ENCODE measurements at regions of chr17 and their contacts with region 1.

Region 1: GRCh38 chr17:79839363-79840268 is at the start of gene CBX4:
- DNase-seq: peak; percentile 93
- ATAC-seq: peak; percentile 73
- H3K4me3 ChIP-seq: peak within 1 kb of the TSS; percentile 63 to 99 (median 94)
- H3K4me3 Mint-ChIP-seq: peak within 1 kb of the TSS; percentile 98
- H3K27ac ChIP-seq: peak within 1 kb of the TSS; percentile 66 to 67
- H3K27ac Mint-ChIP-seq: peak within 1 kb of the TSS; percentile 98
- H3K4me1 ChIP-seq: peaks cover 71 to 83% of the 10 kb centered on the region in 2 donors
- H3K4me1 Mint-ChIP-seq: peaks cover 55% of the 10 kb centered on the region
- H3K27me3 ChIP-seq: peaks cover 0 to 49% (median 31%) of the 10 kb centered on the region in 4 experiments
- H3K27me3 Mint-ChIP-seq: peaks cover 15% of the 10 kb centered on the region
- CTCF ChIP-seq: peak; percentile 74
- total RNA-seq, gene CBX4: 73.2 and 81.9 TPM in 2 replicates

Region 2: DNA sequence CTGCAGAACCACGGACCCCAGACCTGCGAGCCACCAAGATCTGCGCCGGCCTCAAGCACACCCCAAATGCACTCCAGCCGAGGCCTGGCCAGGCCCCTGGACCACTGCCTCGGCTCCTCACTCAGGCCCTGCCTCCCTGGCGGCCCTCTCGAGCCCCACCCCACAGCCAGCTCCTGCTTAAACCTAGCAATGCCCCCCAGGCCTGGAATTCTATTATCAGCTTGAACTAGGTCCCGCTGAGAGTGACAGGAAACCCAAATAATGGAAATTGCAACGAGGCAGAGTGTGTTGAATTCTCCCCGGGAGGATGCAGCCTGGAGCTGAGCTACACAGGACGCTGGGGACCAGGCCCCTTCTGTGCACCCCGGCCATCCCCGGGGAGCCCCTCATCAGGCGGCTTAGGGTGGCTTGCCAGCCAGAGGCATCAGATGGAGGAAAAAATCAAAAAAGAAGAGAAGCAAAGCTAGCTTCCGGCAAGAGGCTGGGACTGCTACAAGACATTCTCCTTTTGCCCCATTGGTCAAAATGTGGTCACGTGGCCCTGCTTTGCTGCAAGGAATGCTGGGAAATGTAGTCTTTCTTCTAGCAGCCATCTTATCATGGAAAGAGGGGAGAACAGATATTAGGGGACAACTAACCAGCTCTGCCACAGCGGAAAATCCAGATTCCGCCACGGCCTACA is 111.2 kb before region 1 on chr17:
- CTCF ChIA-PET with region 1: no interaction called
- POLR2A ChIA-PET with region 1: no interaction called
- intact Hi-C with region 1: loop called (anchors 5 kb)
- DNase-seq: peak; percentile 91
- ATAC-seq: peak; percentile 53
- H3K4me3 ChIP-seq: peak overlapping the region in 4 of 5 experiments; percentile 35 to 58 (median 44)
- H3K4me3 Mint-ChIP-seq: peak overlapping the region; percentile 83
- H3K27ac ChIP-seq: peak overlapping the region in 1 of 2 donors; percentile 41
- H3K27ac Mint-ChIP-seq: peak overlapping the region; percentile 53
- H3K4me1 ChIP-seq: peaks cover 16 to 26% of the 10 kb centered on the region in 2 donors
- H3K4me1 Mint-ChIP-seq: peaks cover 46% of the 10 kb centered on the region
- H3K27me3 ChIP-seq: no peaks in the 10 kb centered on the region
- H3K27me3 Mint-ChIP-seq: no peaks in the 10 kb centered on the region
- CTCF ChIP-seq: no peak

Region 3: GRCh38 chr17:79796763-79797491 is 42.7 kb before region 1 on chr17 and contains the start of gene CBX8:
- CTCF ChIA-PET with region 1: interaction called, 18 read pairs
- POLR2A ChIA-PET with region 1: interaction called, 45 read pairs
- intact Hi-C with region 1: loop called (anchors 1 kb)
- DNase-seq: peak; percentile 99
- ATAC-seq: peak; percentile 90
- H3K4me3 ChIP-seq: peak within 1 kb of the TSS; percentile 65 to 90 (median 71)
- H3K4me3 Mint-ChIP-seq: peak within 1 kb of the TSS; percentile 91
- H3K27ac ChIP-seq: peak within 1 kb of the TSS; percentile 50 to 68
- H3K27ac Mint-ChIP-seq: peak within 1 kb of the TSS; percentile 95
- H3K4me1 ChIP-seq: peaks cover 46 to 50% of the 10 kb centered on the region in 2 donors
- H3K4me1 Mint-ChIP-seq: peaks cover 41% of the 10 kb centered on the region
- H3K27me3 ChIP-seq: peaks cover 0 to 61% (median 46%) of the 10 kb centered on the region in 4 experiments
- H3K27me3 Mint-ChIP-seq: peaks cover 39% of the 10 kb centered on the region
- CTCF ChIP-seq: no peak
- total RNA-seq, gene CBX8: 6.8 and 10.3 TPM in 2 replicates

Region 4: DNA sequence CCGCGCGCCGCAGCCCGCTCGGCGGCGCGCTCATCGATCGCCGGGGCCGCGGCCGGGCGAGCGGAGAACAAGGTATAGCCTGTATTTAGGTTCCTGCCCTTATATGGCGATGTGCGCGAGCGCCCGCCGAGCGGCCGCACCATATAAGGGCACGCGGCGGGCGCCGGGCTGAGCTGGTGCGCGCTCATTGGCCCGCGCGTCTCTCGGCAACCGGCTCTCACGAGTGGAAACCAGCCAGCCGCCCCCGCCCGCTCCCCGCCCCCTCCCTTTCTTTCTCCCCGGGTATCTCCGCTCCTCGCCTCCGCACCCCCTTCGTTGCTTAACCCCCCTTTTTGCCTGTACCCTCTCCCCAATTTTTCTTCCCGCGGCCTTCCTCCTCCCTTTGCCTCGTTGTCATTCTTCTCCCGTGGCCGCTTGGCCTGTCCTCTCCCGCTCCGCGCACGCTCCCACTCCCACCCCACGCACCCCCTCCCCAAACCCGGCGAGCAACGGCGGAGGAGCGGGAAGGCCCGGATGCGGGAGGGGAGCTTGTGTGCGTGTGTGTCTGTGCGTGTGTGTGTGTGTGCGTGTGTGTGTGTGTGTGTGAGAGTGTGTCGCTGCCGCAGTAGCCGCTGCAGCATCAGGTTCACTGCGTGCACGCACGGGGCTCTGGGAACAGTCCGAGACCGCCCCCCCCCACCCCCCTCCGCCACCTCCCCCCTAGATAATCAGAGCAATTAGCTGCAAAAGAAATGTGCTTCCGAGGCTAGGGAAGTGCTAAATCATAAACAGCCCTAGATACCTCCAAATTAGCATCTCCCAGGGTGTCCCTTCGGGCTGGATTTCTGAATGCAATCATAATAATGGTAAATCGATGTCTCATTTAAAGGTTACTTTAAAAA is 29.2 kb before region 1 on chr17:
- CTCF ChIA-PET with region 1: interaction called, 21 read pairs
- POLR2A ChIA-PET with region 1: interaction called, 10 read pairs
- intact Hi-C with region 1: loop called (anchors 1 kb)
- DNase-seq: peak; percentile 63
- ATAC-seq: peak; percentile 74
- H3K4me3 ChIP-seq: no peak overlapping the region
- H3K4me3 Mint-ChIP-seq: peak overlapping the region; percentile 33
- H3K27ac ChIP-seq: no peak overlapping the region
- H3K27ac Mint-ChIP-seq: peak overlapping the region; percentile 46
- H3K4me1 ChIP-seq: peaks cover 44 to 73% of the 10 kb centered on the region in 2 donors
- H3K4me1 Mint-ChIP-seq: peaks cover 29% of the 10 kb centered on the region
- H3K27me3 ChIP-seq: peaks cover 0 to 91% (median 75%) of the 10 kb centered on the region in 4 experiments
- H3K27me3 Mint-ChIP-seq: peaks cover 52% of the 10 kb centered on the region
- CTCF ChIP-seq: no peak

Region 5: DNA sequence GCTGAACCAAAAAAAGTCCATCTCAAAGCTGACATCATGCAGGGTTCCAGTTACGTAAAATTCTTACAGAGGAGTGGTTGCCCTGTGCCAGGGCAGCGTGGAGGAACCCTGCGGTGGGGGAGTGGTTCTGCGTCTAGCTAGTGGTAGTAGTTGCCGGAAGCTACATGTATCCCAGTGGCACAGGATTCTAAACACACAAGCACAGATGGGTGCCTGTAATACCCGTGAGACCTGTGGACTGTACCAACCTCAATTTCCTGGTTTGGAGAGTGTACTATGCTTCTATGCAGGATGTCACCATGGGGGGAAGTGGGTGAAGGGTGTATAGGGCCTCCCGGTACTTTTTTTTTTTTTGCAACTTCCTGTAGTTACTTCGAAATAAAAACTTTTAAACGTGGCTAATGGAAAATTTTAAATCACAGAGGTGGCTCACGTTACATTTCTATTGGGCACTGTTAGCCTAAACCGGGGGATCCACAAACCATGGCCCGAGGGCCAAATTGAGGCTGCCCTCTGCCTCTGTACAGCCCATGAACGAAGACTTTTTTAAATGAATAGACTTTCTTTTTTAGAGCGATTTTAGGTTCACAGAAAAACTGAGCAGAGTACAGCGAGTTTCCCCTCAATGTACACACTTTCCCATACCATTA is 157.5 kb after region 1 on chr17:
- CTCF ChIA-PET with region 1: interaction called, 3 read pairs
- POLR2A ChIA-PET with region 1: interaction called, 4 read pairs
- intact Hi-C with region 1: loop called (anchors 2 kb)
- DNase-seq: peak; percentile 90
- ATAC-seq: peak; percentile 98
- H3K4me3 ChIP-seq: peak overlapping the region; percentile 1 to 45 (median 19)
- H3K4me3 Mint-ChIP-seq: peak overlapping the region; percentile 80
- H3K27ac ChIP-seq: peak overlapping the region; percentile 71 to 81
- H3K27ac Mint-ChIP-seq: peak overlapping the region; percentile 95
- H3K4me1 ChIP-seq: peaks cover 32 to 40% of the 10 kb centered on the region in 2 donors
- H3K4me1 Mint-ChIP-seq: peaks cover 41% of the 10 kb centered on the region
- H3K27me3 ChIP-seq: peaks cover 0 to 11% (median 0%) of the 10 kb centered on the region in 4 experiments
- H3K27me3 Mint-ChIP-seq: peaks cover 5% of the 10 kb centered on the region
- CTCF ChIP-seq: no peak

Measured in B cell (primary cell).